Left ventricle myocardium inferior (tissue), 1 donor: ENCODE measurements at regions of chr2 and their contacts with region 1.

Region 1: GRCh38 chr2:197113275-197113711 is 186.8 kb upstream of the PGAP1 start:
- DNase-seq: no peak
- H3K4me3 ChIP-seq: no peak overlapping the region
- H3K27ac ChIP-seq: no peak overlapping the region
- H3K4me1 ChIP-seq: peaks cover 14% of the 10 kb centered on the region
- H3K27me3 ChIP-seq: no peaks in the 10 kb centered on the region
- CTCF ChIP-seq: peak; percentile 76

Region 2: DNA sequence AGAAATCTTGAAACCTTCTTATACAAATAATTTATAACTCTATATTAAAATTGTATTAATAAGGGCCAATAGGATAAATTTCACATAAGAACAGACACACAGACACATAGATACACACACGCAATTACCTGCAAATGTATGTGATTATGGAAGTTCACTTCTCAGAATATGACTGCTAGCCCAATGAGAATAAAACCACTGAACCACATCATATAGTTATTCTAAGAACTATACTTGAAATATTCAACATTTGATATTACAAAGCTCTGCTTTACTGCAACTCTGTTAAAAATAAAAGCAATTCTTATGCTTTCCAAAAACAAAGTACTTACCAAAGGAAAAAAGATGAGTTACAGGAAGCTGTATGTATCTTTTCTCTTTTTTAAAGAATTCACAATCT is 237.9 kb before region 1 on chr2:
- intact Hi-C with region 1: no loop called
- DNase-seq: no peak
- H3K4me3 ChIP-seq: no peak overlapping the region
- H3K27ac ChIP-seq: no peak overlapping the region
- H3K4me1 ChIP-seq: no peaks in the 10 kb centered on the region
- H3K27me3 ChIP-seq: no peaks in the 10 kb centered on the region
- CTCF ChIP-seq: no peak

Region 3: GRCh38 chr2:197310271-197310985 is 197.1 kb after region 1 on chr2 and contains the start of gene ANKRD44:
- intact Hi-C with region 1: loop called (anchors 10 kb)
- DNase-seq: peak; percentile 93
- H3K4me3 ChIP-seq: peak within 1 kb of the TSS; percentile 80
- H3K27ac ChIP-seq: peak within 1 kb of the TSS; percentile 83
- H3K4me1 ChIP-seq: peaks cover 46% of the 10 kb centered on the region
- H3K27me3 ChIP-seq: no peaks in the 10 kb centered on the region
- CTCF ChIP-seq: peak; percentile 61
- total RNA-seq, gene ANKRD44: 7.1 TPM